T-cell (primary cell): ENCODE measurements at regions of chr12 and their contacts with region 1.

Region 1: DNA sequence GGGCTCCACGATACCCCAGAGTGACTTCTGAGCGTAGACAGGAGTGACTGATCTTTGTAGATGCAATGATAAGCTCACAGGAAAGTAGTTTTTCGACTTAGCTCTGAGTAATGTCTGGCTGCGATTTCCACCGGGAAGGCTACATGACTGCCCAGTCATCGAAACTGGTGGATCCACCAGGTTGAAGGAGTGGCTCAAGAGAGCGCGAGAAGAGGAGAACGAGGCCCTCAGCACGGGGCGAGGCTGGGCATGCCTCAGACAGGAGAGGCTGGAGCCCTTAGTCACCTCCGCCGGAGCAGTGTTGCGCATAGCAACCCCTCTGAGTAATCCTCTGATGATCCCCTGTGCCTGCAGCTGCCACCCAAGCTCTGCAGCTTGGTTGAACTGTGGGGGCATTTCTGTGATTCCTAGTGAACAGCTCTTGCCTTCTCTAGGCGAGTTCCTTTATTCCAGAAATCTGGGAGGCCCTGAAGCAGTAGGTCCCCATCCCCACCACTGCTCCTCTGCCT is 25.6 kb downstream of the ELK3 start:
- DNase-seq: no peak
- ATAC-seq: no peak
- H3K4me3 ChIP-seq: no peak overlapping the region
- H3K4me3 Mint-ChIP-seq: no peak overlapping the region
- H3K27ac ChIP-seq: no peak overlapping the region
- H3K27ac Mint-ChIP-seq: peak overlapping the region in 1 of 2 donors; percentile 19
- H3K4me1 ChIP-seq: peaks cover under 1 to 28% of the 10 kb centered on the region in 2 experiments
- H3K4me1 Mint-ChIP-seq: peaks cover 26 to 62% (median 58%) of the 10 kb centered on the region in 3 donors
- H3K27me3 ChIP-seq: no peaks in the 10 kb centered on the region
- H3K27me3 Mint-ChIP-seq: no peaks in the 10 kb centered on the region

Region 2: DNA sequence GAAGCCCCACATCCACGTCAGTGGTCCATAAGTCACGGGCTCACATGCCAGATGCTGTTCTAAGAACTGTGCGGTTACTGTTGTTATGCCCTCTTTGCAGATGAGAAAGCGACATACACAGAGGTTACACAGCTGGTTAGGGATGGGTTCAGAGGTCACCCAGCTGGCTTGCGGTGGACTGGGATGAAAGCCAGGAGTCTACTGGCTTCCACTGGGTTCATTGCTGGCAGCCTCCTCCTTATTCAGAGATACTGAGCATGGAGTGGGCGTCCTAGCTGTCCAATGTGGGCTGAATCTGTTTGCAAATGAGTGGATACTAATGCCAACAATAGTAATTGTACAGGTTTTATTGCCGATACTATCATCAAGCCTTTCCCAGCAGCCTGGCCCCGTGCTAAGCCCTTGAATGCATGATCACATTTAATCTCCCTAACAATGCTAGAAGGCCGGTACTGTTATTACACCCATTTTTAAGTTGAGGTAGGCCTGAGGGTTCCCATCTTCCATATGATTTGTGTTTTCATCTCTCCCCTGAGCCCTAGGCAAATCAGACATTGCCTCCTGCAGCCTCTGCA is 1942.2 kb before region 1 on chr12:
- CTCF ChIA-PET with region 1: no interaction called
- POLR2A ChIA-PET with region 1: no interaction called
- DNase-seq: no peak
- ATAC-seq: no peak
- H3K4me3 ChIP-seq: no peak overlapping the region
- H3K4me3 Mint-ChIP-seq: no peak overlapping the region
- H3K27ac ChIP-seq: no peak overlapping the region
- H3K27ac Mint-ChIP-seq: no peak overlapping the region
- H3K4me1 ChIP-seq: peaks cover 3 to 6% of the 10 kb centered on the region in 2 experiments
- H3K4me1 Mint-ChIP-seq: peaks cover 11 to 13% (median 12%) of the 10 kb centered on the region in 3 donors
- H3K27me3 ChIP-seq: no peaks in the 10 kb centered on the region
- H3K27me3 Mint-ChIP-seq: no peaks in the 10 kb centered on the region

Region 3: DNA sequence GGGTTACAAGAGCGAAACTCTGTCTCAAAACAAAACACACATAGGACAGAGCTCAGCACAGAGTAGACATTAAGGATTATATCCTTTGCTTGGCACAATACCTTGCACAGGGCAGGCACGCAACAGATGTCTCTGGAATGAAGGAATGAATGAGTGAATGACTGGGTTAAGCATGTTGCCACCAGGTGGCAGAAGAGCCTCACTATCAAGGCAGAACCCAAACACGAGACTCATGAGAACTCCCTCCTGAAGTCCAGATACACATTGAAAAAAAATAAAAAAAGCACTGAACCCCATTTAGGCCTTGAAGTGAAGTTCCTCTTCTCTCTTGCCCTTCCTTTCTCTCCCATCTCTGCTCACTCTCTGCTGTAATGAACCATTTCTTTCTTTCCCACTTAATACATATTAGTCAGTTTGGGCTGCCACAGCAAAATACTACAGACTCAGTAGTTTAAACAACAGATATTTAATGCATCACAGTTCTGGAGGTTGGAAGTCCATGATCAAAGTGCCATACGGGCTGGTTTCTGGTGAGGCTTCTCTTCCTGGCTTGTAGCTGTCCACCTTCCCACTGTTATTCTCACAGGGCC is 157.8 kb before region 1 on chr12:
- CTCF ChIA-PET with region 1: interaction called, 24 to 40 read pairs
- POLR2A ChIA-PET with region 1: interaction called, 4 to 6 read pairs
- DNase-seq: peak; percentile 46 to 89 (median 71)
- ATAC-seq: peak; percentile 81 to 94 (median 85)
- H3K4me3 ChIP-seq: no peak overlapping the region
- H3K4me3 Mint-ChIP-seq: no peak overlapping the region
- H3K27ac ChIP-seq: no peak overlapping the region
- H3K27ac Mint-ChIP-seq: no peak overlapping the region
- H3K4me1 ChIP-seq: peaks cover 12 to 19% of the 10 kb centered on the region in 2 experiments
- H3K4me1 Mint-ChIP-seq: peaks cover 21 to 36% (median 27%) of the 10 kb centered on the region in 3 donors
- H3K27me3 ChIP-seq: no peaks in the 10 kb centered on the region
- H3K27me3 Mint-ChIP-seq: no peaks in the 10 kb centered on the region

Region 4: GRCh38 chr12:96194971-96195844 is 24.5 kb before region 1 on chr12:
- CTCF ChIA-PET with region 1: interaction called, 4 to 14 read pairs
- POLR2A ChIA-PET with region 1: no interaction called
- DNase-seq: peak; percentile 32 to 90 (median 70)
- ATAC-seq: peak; percentile 67 to 77 (median 70)
- H3K4me3 ChIP-seq: peak overlapping the region; percentile 76 to 93
- H3K4me3 Mint-ChIP-seq: peak overlapping the region; percentile 98 to 100 (median 99)
- H3K27ac ChIP-seq: peak overlapping the region; percentile 90
- H3K27ac Mint-ChIP-seq: peak overlapping the region; percentile 99
- H3K4me1 ChIP-seq: peaks cover 25 to 30% of the 10 kb centered on the region in 2 experiments
- H3K4me1 Mint-ChIP-seq: peaks cover 53 to 54% (median 54%) of the 10 kb centered on the region in 3 donors
- H3K27me3 ChIP-seq: no peaks in the 10 kb centered on the region
- H3K27me3 Mint-ChIP-seq: no peaks in the 10 kb centered on the region

Region 5: DNA sequence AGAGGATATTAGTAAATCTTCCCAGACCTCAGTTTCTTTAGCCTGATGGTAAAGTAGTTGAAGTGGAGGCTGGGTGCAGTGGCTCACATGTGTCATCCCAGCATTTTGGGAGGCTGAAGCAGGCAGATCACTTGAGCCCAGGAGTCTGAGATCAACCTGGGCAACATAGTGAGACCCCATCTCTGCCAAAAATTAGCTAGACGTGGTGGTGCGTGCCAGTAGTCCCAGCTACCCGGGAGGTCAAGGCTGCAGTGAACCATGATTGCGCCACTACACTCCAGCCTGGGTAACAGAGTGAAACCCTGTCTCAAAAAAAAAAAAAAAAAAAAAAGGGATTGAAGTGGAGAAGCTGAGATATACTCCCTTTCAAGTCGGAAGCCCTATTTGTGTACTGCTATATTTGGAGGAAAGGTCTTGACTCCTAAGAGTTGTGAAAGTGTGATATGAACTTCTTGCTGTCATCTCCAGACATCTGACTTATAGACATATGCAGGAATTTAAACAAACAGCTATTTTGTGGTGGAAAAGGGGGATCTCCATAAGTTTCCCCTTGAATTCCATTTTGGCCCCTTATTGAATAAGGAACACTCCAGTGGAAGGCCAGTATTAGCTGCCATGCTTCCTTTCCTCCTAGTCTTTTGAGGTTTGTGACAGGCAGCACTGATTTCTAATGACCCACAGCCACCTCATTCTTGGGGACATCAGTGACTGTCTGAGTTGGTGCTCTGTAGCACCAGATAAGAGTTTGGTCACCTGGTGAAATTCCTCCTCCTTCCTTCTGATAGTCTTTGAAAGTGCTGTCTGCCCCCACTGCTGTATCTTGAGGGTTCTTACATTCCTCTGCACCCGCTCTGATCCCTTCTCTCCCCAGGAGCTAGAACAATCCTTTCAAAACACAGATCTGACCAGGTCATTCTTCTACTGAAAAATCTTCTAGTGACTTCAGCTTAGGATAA is 18.2 kb before region 1 on chr12:
- CTCF ChIA-PET with region 1: interaction called, 8 to 17 read pairs
- POLR2A ChIA-PET with region 1: interaction called in 1 of 2 experiments, 16 read pairs
- DNase-seq: no peak
- ATAC-seq: no peak
- H3K4me3 ChIP-seq: no peak overlapping the region
- H3K4me3 Mint-ChIP-seq: no peak overlapping the region
- H3K27ac ChIP-seq: no peak overlapping the region
- H3K27ac Mint-ChIP-seq: peak overlapping the region; percentile 3 to 50
- H3K4me1 ChIP-seq: peaks cover 30 to 47% of the 10 kb centered on the region in 2 experiments
- H3K4me1 Mint-ChIP-seq: peaks cover 77 to 83% (median 83%) of the 10 kb centered on the region in 3 donors
- H3K27me3 ChIP-seq: no peaks in the 10 kb centered on the region
- H3K27me3 Mint-ChIP-seq: no peaks in the 10 kb centered on the region

Region 6: DNA sequence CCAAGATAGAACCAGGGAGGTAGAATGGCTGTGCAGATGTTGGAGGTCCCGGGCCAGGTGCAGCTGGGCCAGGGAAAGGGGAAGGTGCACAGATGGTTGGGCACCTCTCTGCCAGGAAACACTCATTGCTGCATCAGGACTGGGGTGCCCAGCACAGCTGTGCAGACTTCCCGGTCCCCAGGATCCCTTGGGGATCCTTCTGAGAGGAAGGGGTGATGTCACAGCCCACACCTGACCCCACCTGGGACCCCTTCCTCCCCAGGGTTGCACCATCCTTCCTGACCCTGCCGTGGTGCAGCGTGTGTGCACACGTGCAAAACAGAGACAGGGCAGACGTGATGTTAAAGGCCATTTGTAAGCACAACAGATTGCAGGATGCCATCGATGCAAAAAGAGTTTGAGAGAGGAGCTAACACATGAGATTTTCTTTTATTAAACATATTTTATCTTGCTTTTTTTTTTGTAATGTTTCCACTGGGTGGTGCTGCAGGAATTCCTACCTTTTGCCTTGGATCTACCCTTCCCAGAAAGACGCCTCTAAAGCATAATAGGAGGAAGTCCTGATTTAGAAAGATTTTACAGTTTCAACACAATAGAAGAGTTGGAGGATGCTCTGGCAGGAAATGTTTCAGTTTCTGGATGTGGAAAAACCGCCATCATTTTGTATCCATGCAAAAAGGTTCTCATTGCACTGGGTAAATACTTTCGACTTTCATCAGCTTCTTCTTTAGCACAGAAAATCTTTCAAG is 10.8 kb before region 1 on chr12:
- CTCF ChIA-PET with region 1: interaction called, 8 to 17 read pairs
- POLR2A ChIA-PET with region 1: interaction called in 1 of 2 experiments, 16 read pairs
- DNase-seq: no peak
- ATAC-seq: peak in 3 of 4 experiments; percentile 11 to 17 (median 13)
- H3K4me3 ChIP-seq: peak overlapping the region in 1 of 2 donors; percentile 25
- H3K4me3 Mint-ChIP-seq: peak overlapping the region; percentile 71 to 79 (median 73)
- H3K27ac ChIP-seq: peak overlapping the region; percentile 48
- H3K27ac Mint-ChIP-seq: peak overlapping the region; percentile 97
- H3K4me1 ChIP-seq: peaks cover 77 to 84% of the 10 kb centered on the region in 2 experiments
- H3K4me1 Mint-ChIP-seq: peaks cover 99 to 100% (median 99%) of the 10 kb centered on the region in 3 donors
- H3K27me3 ChIP-seq: no peaks in the 10 kb centered on the region
- H3K27me3 Mint-ChIP-seq: no peaks in the 10 kb centered on the region

Region 7: GRCh38 chr12:96308881-96309280 is 89.1 kb after region 1 on chr12:
- CTCF ChIA-PET with region 1: interaction called, 3 to 12 read pairs
- POLR2A ChIA-PET with region 1: no interaction called
- DNase-seq: no peak
- ATAC-seq: no peak
- H3K4me3 ChIP-seq: no peak overlapping the region
- H3K4me3 Mint-ChIP-seq: no peak overlapping the region
- H3K27ac ChIP-seq: no peak overlapping the region
- H3K27ac Mint-ChIP-seq: no peak overlapping the region
- H3K4me1 ChIP-seq: peaks cover 2 to 5% of the 10 kb centered on the region in 2 experiments
- H3K4me1 Mint-ChIP-seq: peaks cover 18 to 31% (median 29%) of the 10 kb centered on the region in 3 donors
- H3K27me3 ChIP-seq: no peaks in the 10 kb centered on the region
- H3K27me3 Mint-ChIP-seq: no peaks in the 10 kb centered on the region

Region 8: DNA sequence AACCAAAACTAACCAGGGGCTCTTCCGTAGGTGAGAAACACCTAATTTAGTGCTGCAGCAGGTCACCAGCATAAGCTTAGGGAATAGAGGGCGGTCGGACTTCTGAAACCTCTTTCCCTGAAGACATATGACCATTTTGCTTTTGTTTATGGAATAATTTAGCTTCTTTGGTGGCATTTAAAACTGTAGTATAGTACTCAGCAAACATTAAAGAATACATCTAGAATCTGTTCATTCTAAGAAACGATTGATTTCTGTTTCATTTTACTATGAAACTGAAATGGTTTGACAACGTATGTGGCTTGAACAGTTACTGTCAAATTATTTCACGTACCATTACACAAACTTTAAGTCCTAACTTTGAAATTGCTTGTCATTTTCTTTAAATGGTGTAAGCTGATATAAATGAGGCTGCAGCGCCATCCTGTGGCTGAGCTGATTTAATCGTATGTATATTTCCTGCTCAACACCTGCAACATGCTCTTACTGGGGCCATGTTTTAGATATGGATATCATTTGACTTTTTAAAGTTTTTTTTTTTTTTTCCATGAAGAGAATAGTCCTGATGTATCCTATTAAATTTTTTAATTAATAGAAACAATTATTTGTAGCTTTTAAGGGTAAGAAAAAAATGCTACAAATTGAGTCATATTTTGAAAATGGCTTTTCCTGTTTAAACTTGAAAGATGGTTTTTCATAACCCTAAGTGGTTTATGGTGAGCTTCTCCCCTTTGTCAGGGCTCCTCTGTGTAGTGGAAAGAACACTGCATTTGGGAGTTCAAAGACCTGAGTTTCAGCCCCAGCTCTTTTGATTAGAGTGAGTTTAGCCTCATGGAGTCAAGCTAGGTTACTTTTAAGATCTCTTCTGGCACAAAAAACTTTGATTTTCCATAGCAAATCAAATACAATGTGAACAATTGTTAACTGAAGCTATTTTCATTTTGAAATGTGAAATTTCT is 297.0 kb after region 1 on chr12:
- CTCF ChIA-PET with region 1: interaction called, 36 to 47 read pairs
- POLR2A ChIA-PET with region 1: no interaction called
- DNase-seq: peak; percentile 65 to 93 (median 83)
- ATAC-seq: peak; percentile 77 to 92 (median 83)
- H3K4me3 ChIP-seq: no peak overlapping the region
- H3K4me3 Mint-ChIP-seq: peak overlapping the region in 2 of 3 donors; percentile 35 to 37
- H3K27ac ChIP-seq: peak overlapping the region; percentile 28
- H3K27ac Mint-ChIP-seq: peak overlapping the region; percentile 68 to 81
- H3K4me1 ChIP-seq: peaks cover 0 to 7% of the 10 kb centered on the region in 2 experiments
- H3K4me1 Mint-ChIP-seq: peaks cover 6 to 12% (median 10%) of the 10 kb centered on the region in 3 donors
- H3K27me3 ChIP-seq: no peaks in the 10 kb centered on the region
- H3K27me3 Mint-ChIP-seq: no peaks in the 10 kb centered on the region

Region 9: GRCh38 chr12:96809522-96809921 is 589.8 kb after region 1 on chr12:
- CTCF ChIA-PET with region 1: no interaction called
- POLR2A ChIA-PET with region 1: no interaction called
- DNase-seq: no peak
- ATAC-seq: no peak
- H3K4me3 ChIP-seq: no peak overlapping the region
- H3K4me3 Mint-ChIP-seq: no peak overlapping the region
- H3K27ac ChIP-seq: no peak overlapping the region
- H3K27ac Mint-ChIP-seq: no peak overlapping the region
- H3K4me1 ChIP-seq: no peaks in the 10 kb centered on the region
- H3K4me1 Mint-ChIP-seq: no peaks in the 10 kb centered on the region
- H3K27me3 ChIP-seq: peaks cover 0 to 4% of the 10 kb centered on the region in 2 experiments
- H3K27me3 Mint-ChIP-seq: peaks cover 1 to 4% of the 10 kb centered on the region in 2 donors